Mammary epithelial cell (primary cell): ENCODE measurements at regions of chr18 and their contacts with region 1.

Region 1: GRCh38 chr18:23131693-23132319 is 3.5 kb upstream of the CABLES1 start:
- DNase-seq: peak; percentile 60
- H3K4me3 ChIP-seq: no peak overlapping the region
- H3K27ac ChIP-seq: no peak overlapping the region
- H3K4me1 ChIP-seq: peaks cover 24% of the 10 kb centered on the region
- H3K27me3 ChIP-seq: no peaks in the 10 kb centered on the region
- CTCF ChIP-seq: peak; percentile 67 to 75

Region 2: DNA sequence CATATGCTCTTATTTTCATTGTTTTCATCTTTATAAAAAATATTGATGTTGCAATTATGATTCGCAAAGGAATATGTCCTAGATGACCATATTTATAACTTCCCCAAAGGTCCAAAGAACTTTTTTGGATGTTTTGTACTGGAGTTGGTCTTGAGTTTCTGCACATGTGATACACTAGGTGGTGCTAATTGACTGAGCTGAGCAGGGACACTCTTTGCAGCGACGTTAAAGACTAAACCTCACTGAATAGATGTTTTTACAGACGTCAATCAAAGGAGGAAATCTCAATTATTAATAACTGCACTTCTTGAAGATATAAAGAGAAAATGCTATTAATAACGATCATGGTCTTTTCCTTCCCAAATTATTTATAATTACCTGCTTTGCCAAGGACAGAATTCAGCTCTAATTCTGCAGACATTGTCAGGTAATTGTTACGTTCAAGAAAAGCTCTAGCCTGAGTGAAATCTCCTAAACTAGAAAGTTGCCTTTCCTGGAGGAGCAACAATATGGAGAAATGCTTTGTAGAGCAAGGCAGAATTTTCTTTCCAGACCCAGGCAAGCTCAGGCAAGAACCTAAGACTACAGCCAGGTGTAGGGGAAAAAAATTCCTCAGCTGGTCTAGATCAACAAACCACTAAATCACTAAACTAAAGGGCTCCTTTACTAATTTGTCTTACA is 318.0 kb before region 1 on chr18:
- CTCF ChIA-PET with region 1: no interaction called
- dilution Hi-C with region 1: no loop called
- in situ Hi-C with region 1: no loop called
- intact Hi-C with region 1: loop called (anchors 1 kb)
- DNase-seq: peak; percentile 60
- H3K4me3 ChIP-seq: peak overlapping the region in 2 of 3 experiments; percentile 17 to 25
- H3K27ac ChIP-seq: peak overlapping the region; percentile 68
- H3K4me1 ChIP-seq: peaks cover 30% of the 10 kb centered on the region
- H3K27me3 ChIP-seq: no peaks in the 10 kb centered on the region
- CTCF ChIP-seq: peak; percentile 77 to 81

Region 3: GRCh38 chr18:23067236-23067635 is 64.6 kb before region 1 on chr18:
- CTCF ChIA-PET with region 1: no interaction called
- dilution Hi-C with region 1: no loop called
- in situ Hi-C with region 1: no loop called
- intact Hi-C with region 1: no loop called
- DNase-seq: no peak
- H3K4me3 ChIP-seq: no peak overlapping the region
- H3K27ac ChIP-seq: no peak overlapping the region
- H3K4me1 ChIP-seq: no peaks in the 10 kb centered on the region
- H3K27me3 ChIP-seq: no peaks in the 10 kb centered on the region
- CTCF ChIP-seq: no peak

Region 4: GRCh38 chr18:23213200-23213599 is 81.4 kb after region 1 on chr18:
- CTCF ChIA-PET with region 1: no interaction called
- dilution Hi-C with region 1: loop called (anchors 5 kb)
- in situ Hi-C with region 1: no loop called
- intact Hi-C with region 1: no loop called
- DNase-seq: no peak
- H3K4me3 ChIP-seq: no peak overlapping the region
- H3K27ac ChIP-seq: no peak overlapping the region
- H3K4me1 ChIP-seq: no peaks in the 10 kb centered on the region
- H3K27me3 ChIP-seq: no peaks in the 10 kb centered on the region
- CTCF ChIP-seq: no peak

Region 5: GRCh38 chr18:23377669-23378301 is 246.0 kb after region 1 on chr18:
- CTCF ChIA-PET with region 1: interaction called, 15 read pairs
- dilution Hi-C with region 1: loop called (anchors 5 kb)
- in situ Hi-C with region 1: loop called (anchors 5 to 10 kb)
- intact Hi-C with region 1: loop called (anchors 1 kb)
- DNase-seq: peak; percentile 77
- H3K4me3 ChIP-seq: peak overlapping the region in 1 of 3 experiments; percentile 19
- H3K27ac ChIP-seq: peak overlapping the region; percentile 86
- H3K4me1 ChIP-seq: peaks cover 15% of the 10 kb centered on the region
- H3K27me3 ChIP-seq: no peaks in the 10 kb centered on the region
- CTCF ChIP-seq: no peak

Region 6: DNA sequence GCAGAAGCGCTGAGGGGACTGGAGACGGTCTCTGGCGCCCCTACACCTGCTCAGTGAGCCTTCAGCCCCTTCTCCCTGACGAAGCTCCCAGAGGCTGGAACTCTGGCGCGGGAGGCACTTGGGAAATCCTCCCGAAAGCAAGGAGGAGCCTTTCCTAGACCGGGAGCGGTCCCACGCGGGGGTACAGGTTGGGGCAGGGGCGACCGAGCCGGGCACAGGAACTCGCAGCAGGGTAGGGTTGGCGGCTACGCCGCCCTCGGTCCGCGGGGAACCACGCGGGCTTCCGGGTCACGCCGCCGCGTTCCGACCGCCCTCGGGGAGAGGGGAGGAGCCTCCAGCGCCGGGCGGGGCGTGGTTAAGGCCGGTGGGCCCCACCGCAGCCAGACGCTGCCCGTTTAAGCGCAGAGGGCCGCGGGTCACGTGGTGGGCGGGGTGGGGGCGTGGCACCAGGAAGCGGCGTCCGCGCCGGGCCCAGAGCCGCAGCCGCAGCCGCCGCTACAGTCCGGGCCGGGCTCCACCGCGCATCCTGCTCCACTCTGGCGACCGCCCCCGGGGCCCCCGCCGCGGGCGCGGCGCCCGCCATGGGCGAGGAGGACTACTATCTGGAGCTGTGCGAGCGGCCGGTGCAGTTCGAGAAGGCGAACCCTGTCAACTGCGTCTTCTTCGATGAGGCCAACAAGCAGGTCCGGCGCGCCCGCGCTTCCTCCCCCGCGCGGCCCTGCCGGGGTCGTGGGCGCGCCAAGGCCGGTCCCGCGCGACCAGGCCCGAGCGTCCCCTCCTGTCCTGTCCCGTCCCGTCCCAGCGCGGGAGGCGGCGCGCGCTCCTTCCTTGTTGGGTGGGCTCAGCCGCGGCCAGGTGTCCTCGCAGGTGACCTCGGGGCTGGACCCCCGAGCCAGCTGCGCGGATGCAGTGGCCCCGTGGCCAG is 371.5 kb after region 1 on chr18 and contains the start of gene RMC1:
- CTCF ChIA-PET with region 1: no interaction called
- dilution Hi-C with region 1: no loop called
- in situ Hi-C with region 1: no loop called
- intact Hi-C with region 1: loop called (anchors 10 kb)
- DNase-seq: peak; percentile 90
- H3K4me3 ChIP-seq: peak within 1 kb of the TSS; percentile 75 to 87 (median 83)
- H3K27ac ChIP-seq: peak within 1 kb of the TSS; percentile 67
- H3K4me1 ChIP-seq: peaks cover 15% of the 10 kb centered on the region
- H3K27me3 ChIP-seq: no peaks in the 10 kb centered on the region
- CTCF ChIP-seq: peak in 1 of 2 donors; percentile 21
- total RNA-seq, gene RMC1: 29.8 to 33.3 TPM